ENCODE measurements at regions of chr2 and their contacts with region 1.

Region 1: DNA sequence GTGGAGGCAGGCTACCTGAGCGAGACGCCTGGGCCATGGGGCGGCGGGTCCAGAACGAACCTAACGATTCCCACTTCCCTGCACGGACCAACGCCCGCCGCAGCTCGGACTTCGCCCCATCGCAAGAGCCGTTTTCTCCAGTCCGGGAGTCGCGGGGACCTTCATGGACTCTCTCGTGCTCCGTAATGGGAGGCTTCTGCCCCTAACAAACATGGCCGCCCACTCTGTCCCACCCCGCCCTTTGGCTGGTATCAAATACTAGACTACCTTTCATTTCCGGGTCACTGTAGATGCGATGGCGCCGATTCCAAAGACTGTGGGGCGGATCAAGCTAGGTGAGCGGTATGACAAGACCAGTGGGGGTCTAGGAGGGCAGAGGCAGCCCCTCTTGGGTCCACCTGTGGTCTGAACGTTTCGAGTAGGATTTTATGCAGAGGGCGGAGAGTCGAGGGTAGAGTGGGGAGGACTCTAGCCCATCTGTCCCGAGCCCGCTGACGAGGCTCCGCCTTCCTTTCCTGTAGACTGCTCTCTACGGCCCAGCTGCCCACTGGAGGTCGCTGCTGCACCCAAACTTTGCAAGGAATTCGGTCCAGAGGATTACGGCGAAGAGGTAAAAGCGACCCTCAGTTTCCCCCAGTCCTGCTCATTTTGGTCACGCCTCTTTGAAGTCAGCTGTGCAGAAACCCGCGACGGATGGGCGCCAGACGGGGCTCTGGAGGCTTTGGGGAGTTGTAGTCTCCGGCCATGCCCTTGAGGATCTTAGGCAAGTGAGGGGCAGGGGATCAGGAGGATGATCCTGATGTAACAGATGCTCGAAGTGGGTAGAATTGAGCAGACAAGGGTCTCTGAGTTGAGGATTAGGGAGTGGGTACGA is at the starts of genes CCDC142 and TTC31:
- DNase-seq: peak; percentile 97
- H3K4me3 ChIP-seq: peak within 1 kb of the TSS; percentile 86
- H3K27ac ChIP-seq: peak within 1 kb of the TSS; percentile 91
- H3K4me1 ChIP-seq: peaks cover 16% of the 10 kb centered on the region
- H3K27me3 ChIP-seq: no peaks in the 10 kb centered on the region
- CTCF ChIP-seq: peak; percentile 73
- total RNA-seq, gene CCDC142: 14.5 to 28.3 TPM
- total RNA-seq, gene TTC31: 23.3 to 25.2 TPM

Region 2: DNA sequence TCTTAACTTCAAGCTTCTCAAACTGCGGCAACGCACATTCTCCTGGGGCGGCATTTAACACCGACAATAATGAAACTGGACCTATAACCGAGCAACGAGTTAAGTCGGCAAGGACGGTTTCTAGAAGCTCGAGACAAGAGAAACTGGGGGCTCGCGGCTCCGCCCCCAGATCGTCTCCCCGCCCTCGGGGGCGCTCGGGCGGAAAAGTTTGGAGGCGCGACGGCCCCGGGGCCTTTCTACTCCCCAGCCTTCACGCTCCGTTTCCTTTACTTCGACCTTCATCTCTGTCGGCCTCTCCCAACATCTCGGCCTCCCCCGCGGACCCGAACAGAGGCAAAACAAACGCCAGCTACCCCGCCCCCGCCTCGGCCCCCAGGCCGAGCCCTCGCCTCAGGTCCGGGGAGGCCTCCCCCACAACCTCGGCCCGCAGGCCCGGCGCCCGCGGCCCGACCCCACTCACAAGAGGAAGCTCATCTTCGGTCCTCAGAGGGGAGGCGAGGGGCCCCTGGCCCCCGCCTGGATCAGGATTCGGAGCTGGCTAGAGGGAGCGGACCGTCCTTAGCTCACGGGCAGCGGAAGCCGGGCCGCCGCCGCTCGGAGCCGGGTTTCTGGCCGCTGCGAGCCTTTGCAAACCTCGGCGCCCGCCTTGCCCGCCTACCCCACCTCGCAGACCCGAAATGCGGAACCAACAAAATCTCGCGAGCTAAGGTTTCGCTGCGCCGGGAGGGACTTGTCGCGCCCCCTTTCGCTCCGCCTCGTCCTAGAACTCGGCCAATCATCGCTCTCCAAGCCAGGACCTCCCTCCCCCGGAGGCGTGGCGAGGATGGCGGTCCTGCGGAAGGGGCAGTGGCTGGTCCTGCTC is 304.6 kb before region 1 on chr2 and contains the start of gene MOB1A:
- intact Hi-C with region 1: no loop called
- DNase-seq: peak; percentile 99
- H3K4me3 ChIP-seq: peak within 1 kb of the TSS; percentile 69
- H3K27ac ChIP-seq: peak within 1 kb of the TSS; percentile 89
- H3K4me1 ChIP-seq: peaks cover 6% of the 10 kb centered on the region
- H3K27me3 ChIP-seq: no peaks in the 10 kb centered on the region
- CTCF ChIP-seq: no peak
- total RNA-seq, gene MOB1A: 124 to 160 TPM

Region 3: GRCh38 chr2:74529357-74530238 is 46.6 kb after region 1 on chr2 and contains the starts of genes AUP1 and HTRA2:
- intact Hi-C with region 1: loop called (anchors 5 kb)
- DNase-seq: peak; percentile 99
- H3K4me3 ChIP-seq: peak within 1 kb of the TSS; percentile 91
- H3K27ac ChIP-seq: peak within 1 kb of the TSS; percentile 75
- H3K4me1 ChIP-seq: no peaks in the 10 kb centered on the region
- H3K27me3 ChIP-seq: no peaks in the 10 kb centered on the region
- CTCF ChIP-seq: no peak
- total RNA-seq, gene AUP1: 107 to 212 TPM
- total RNA-seq, gene HTRA2: 26.3 to 41.5 TPM

Region 4: GRCh38 chr2:74587664-74588277 is 104.7 kb after region 1 on chr2:
- intact Hi-C with region 1: loop called (anchors 2 kb)
- DNase-seq: peak; percentile 70
- H3K4me3 ChIP-seq: no peak overlapping the region
- H3K27ac ChIP-seq: no peak overlapping the region
- H3K4me1 ChIP-seq: no peaks in the 10 kb centered on the region
- H3K27me3 ChIP-seq: no peaks in the 10 kb centered on the region
- CTCF ChIP-seq: peak; percentile 42